A673 (cell line): ENCODE measurements at regions of chr18 and their contacts with region 1.

Region 1: DNA sequence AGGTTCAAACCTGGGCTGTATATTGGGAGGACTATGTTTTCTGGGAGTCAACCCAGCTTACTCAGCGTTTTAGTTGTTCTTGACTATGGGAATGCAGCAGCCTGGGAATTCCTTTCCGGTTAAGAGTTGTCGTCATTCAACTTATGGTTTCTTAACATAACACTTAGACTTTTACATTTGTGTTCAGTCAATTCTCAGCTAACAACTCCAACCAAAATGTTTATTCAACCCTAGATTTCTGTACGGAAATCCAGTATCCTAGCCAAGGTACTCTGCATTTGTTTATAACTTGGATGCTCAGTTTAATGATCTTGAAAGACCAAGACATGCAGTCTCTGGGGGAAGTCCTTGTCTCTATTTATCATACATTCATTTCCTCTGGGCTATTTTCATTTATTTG is 960.9 kb downstream of the CBLN2 start:
- DNase-seq: peak; percentile 52
- H3K4me3 ChIP-seq: peak overlapping the region; percentile 28
- H3K27ac ChIP-seq: no peak overlapping the region
- H3K4me1 ChIP-seq: peaks cover 6% of the 10 kb centered on the region
- H3K27me3 ChIP-seq: no peaks in the 10 kb centered on the region
- CTCF ChIP-seq: no peak

Region 2: GRCh38 chr18:71324356-71324755 is 258.9 kb before region 1 on chr18:
- CTCF ChIA-PET with region 1: no interaction called
- POLR2A ChIA-PET with region 1: interaction called, 21 read pairs
- intact Hi-C with region 1: no loop called
- DNase-seq: no peak
- H3K4me3 ChIP-seq: no peak overlapping the region
- H3K27ac ChIP-seq: no peak overlapping the region
- H3K4me1 ChIP-seq: peaks cover 10% of the 10 kb centered on the region
- H3K27me3 ChIP-seq: no peaks in the 10 kb centered on the region
- CTCF ChIP-seq: no peak

Region 3: GRCh38 chr18:72114801-72115594 is 531.7 kb after region 1 on chr18:
- CTCF ChIA-PET with region 1: no interaction called
- POLR2A ChIA-PET with region 1: no interaction called
- intact Hi-C with region 1: no loop called
- DNase-seq: no peak
- H3K4me3 ChIP-seq: no peak overlapping the region
- H3K27ac ChIP-seq: no peak overlapping the region
- H3K4me1 ChIP-seq: no peaks in the 10 kb centered on the region
- H3K27me3 ChIP-seq: no peaks in the 10 kb centered on the region
- CTCF ChIP-seq: no peak